Transverse colon (tissue), 4 donors: ENCODE measurements at regions of chr3 and their contacts with region 1.

Region 1: DNA sequence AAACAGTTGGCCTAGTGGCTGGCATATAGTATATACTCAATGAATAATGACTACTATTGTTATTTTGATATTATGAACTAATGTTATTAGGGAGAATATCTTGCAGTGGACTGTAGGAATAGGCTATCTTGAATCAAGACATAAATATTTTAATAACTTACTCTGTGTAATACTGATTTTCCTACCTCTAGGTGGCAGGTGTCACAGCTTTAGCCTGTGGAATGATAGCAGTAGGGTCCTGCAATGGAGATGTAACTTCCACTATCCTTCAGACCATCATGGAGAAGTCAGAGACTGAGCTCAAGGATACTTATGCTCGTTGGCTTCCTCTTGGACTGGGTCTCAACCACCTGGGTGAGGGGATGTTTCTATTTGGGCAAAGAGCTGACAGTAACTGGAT is 6.5 kb downstream of the PSMD2 start:
- DNase-seq: no peak
- H3K4me3 ChIP-seq: no peak overlapping the region
- H3K27ac ChIP-seq: peak overlapping the region in 2 of 4 donors; percentile 59 to 64
- H3K4me1 ChIP-seq: peaks cover 0 to 16% (median 7%) of the 10 kb centered on the region in 4 donors
- H3K27me3 ChIP-seq: no peaks in the 10 kb centered on the region
- CTCF ChIP-seq: peak; percentile 24 to 43 (median 34)
- EP300 ChIP-seq: no peak
- POLR2A ChIP-seq: no peak

Region 2: GRCh38 chr3:184354121-184354728 is 48.6 kb after region 1 on chr3:
- in situ Hi-C with region 1: no loop called
- intact Hi-C with region 1: loop called (anchors 10 kb)
- DNase-seq: peak; percentile 66
- H3K4me3 ChIP-seq: no peak overlapping the region
- H3K27ac ChIP-seq: no peak overlapping the region
- H3K4me1 ChIP-seq: peaks cover 6 to 33% (median 18%) of the 10 kb centered on the region in 4 donors
- H3K27me3 ChIP-seq: no peaks in the 10 kb centered on the region
- CTCF ChIP-seq: peak; percentile 65 to 78 (median 75)
- EP300 ChIP-seq: no peak
- POLR2A ChIP-seq: no peak